A673 (cell line): ENCODE measurements at regions of chr5 and their contacts with region 1.

Region 1: GRCh38 chr5:163106098-163106497 is 331.3 kb upstream of the CCNG1 start:
- DNase-seq: no peak
- H3K4me3 ChIP-seq: no peak overlapping the region
- H3K27ac ChIP-seq: no peak overlapping the region
- H3K4me1 ChIP-seq: no peaks in the 10 kb centered on the region
- H3K27me3 ChIP-seq: no peaks in the 10 kb centered on the region
- CTCF ChIP-seq: no peak

Region 2: DNA sequence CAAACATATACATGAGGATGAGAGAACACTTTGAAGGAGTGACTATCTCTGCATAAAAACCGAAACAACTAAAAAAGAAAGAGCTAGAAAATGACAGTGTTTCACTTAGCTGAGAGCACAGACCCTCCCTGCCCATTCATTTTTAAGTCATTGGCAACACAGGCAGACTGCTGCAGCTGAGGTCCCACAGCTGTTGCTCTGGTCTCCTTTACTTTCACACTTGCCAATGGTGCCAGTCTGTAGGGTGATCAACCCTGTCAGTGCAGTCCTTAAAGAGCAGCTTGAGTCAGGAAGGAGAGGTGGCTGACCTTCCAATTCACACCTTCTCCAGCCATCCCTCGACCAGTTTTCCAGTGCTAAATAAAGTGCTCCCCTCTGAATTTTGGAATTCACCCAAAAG is 177.0 kb before region 1 on chr5:
- CTCF ChIA-PET with region 1: no interaction called
- POLR2A ChIA-PET with region 1: no interaction called
- intact Hi-C with region 1: no loop called
- DNase-seq: no peak
- H3K4me3 ChIP-seq: no peak overlapping the region
- H3K27ac ChIP-seq: no peak overlapping the region
- H3K4me1 ChIP-seq: no peaks in the 10 kb centered on the region
- H3K27me3 ChIP-seq: no peaks in the 10 kb centered on the region
- CTCF ChIP-seq: no peak

Region 3: DNA sequence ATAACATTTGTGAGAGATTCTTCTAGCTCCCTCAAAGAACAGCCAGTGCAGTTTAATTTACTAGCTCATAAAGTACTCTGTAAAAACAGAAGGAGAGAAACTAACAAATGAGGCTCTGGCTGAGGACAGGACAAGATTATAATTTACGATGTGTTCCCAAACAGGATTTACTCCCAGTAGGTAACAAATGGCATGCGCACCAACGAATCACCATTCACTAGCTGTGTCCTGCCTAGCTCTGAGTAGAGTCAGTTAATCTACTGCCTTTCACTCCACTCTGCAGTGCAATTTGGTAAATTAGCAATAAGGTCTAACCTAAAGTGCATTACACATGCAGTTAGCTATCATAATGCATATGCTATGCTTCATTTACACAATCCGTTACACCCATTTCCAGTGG is 166.1 kb before region 1 on chr5:
- CTCF ChIA-PET with region 1: no interaction called
- POLR2A ChIA-PET with region 1: no interaction called
- intact Hi-C with region 1: no loop called
- DNase-seq: peak; percentile 52
- H3K4me3 ChIP-seq: no peak overlapping the region
- H3K27ac ChIP-seq: no peak overlapping the region
- H3K4me1 ChIP-seq: peaks cover 30% of the 10 kb centered on the region
- H3K27me3 ChIP-seq: no peaks in the 10 kb centered on the region
- CTCF ChIP-seq: no peak

Region 4: DNA sequence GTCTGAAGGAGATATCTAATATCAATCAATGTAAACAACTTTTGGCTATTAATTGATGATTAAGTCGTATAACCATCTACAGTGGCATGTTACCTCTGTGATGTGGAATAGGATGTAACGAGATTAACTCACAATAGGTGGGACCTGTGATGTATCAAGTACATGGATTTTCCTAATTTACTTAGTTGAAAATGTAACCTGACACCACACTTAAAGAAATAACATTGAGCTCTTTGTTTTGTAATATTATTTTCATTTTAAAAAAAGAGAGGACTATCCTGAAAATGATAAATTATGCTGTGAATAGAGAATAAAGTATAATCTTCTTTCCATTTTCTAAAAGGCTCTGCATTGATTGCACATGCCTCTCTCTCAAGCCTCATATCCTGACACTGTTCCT is 18.1 kb after region 1 on chr5:
- CTCF ChIA-PET with region 1: no interaction called
- POLR2A ChIA-PET with region 1: no interaction called
- intact Hi-C with region 1: loop called (anchors 2 kb)
- DNase-seq: no peak
- H3K4me3 ChIP-seq: no peak overlapping the region
- H3K27ac ChIP-seq: no peak overlapping the region
- H3K4me1 ChIP-seq: no peaks in the 10 kb centered on the region
- H3K27me3 ChIP-seq: no peaks in the 10 kb centered on the region
- CTCF ChIP-seq: no peak

Region 5: DNA sequence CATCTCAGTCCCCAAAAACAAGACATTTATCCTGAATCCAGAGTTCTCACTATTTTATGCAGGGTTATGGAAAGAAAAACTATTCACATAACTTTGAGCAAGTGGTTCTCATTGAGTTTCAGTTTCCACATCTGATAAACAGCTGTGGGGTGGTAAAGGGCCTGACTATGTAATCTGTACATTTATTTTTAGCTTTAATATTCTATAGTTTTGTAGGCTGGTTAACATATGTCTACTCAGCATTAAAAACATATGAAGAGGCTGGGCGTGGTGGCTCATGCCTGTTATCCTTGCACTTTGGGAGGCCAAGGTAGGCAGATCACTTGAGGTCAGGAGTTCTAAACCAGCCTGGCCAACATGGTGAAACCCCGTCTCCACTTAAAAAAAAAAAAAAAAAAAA is 29.8 kb after region 1 on chr5:
- CTCF ChIA-PET with region 1: no interaction called
- POLR2A ChIA-PET with region 1: no interaction called
- intact Hi-C with region 1: no loop called
- DNase-seq: no peak
- H3K4me3 ChIP-seq: no peak overlapping the region
- H3K27ac ChIP-seq: no peak overlapping the region
- H3K4me1 ChIP-seq: no peaks in the 10 kb centered on the region
- H3K27me3 ChIP-seq: no peaks in the 10 kb centered on the region
- CTCF ChIP-seq: no peak

Region 6: GRCh38 chr5:164498438-164498837 is 1392.3 kb after region 1 on chr5:
- CTCF ChIA-PET with region 1: no interaction called
- POLR2A ChIA-PET with region 1: no interaction called
- intact Hi-C with region 1: no loop called
- DNase-seq: no peak
- H3K4me3 ChIP-seq: no peak overlapping the region
- H3K27ac ChIP-seq: no peak overlapping the region
- H3K4me1 ChIP-seq: no peaks in the 10 kb centered on the region
- H3K27me3 ChIP-seq: no peaks in the 10 kb centered on the region
- CTCF ChIP-seq: no peak